Tibial artery (tissue), 4 donors: ENCODE measurements at regions of chr18 and their contacts with region 1.

Region 1: GRCh38 chr18:62399781-62400308 is 74.7 kb downstream of the TNFRSF11A start:
- DNase-seq: no peak
- H3K4me3 ChIP-seq: no peak overlapping the region
- H3K27ac ChIP-seq: no peak overlapping the region
- H3K4me1 ChIP-seq: no peaks in the 10 kb centered on the region
- H3K27me3 ChIP-seq: no peaks in the 10 kb centered on the region
- CTCF ChIP-seq: no peak

Region 2: GRCh38 chr18:62281684-62282083 is 118.2 kb before region 1 on chr18:
- intact Hi-C with region 1: loop called (anchors 10 kb)
- DNase-seq: no peak
- H3K4me3 ChIP-seq: no peak overlapping the region
- H3K27ac ChIP-seq: no peak overlapping the region
- H3K4me1 ChIP-seq: peaks cover 0 to 34% (median 13%) of the 10 kb centered on the region in 4 donors
- H3K27me3 ChIP-seq: no peaks in the 10 kb centered on the region
- CTCF ChIP-seq: no peak